ENCODE measurements at regions of chr19 and their contacts with region 1.

Region 1: GRCh38 chr19:42325273-42325895 is at the start of gene MEGF8:
- DNase-seq: peak; percentile 99
- ATAC-seq: peak; percentile 98
- H3K4me3 Mint-ChIP-seq: peak within 1 kb of the TSS; percentile 80
- H3K27ac Mint-ChIP-seq: peak within 1 kb of the TSS; percentile 69
- H3K4me1 Mint-ChIP-seq: peaks cover 12% of the 10 kb centered on the region
- H3K27me3 Mint-ChIP-seq: peaks cover 12% of the 10 kb centered on the region
- total RNA-seq, gene MEGF8: 5.2 to 5.3 TPM

Region 2: GRCh38 chr19:41397086-41398049 is 928.0 kb before region 1 on chr19 and contains the starts of genes BCKDHA and EXOSC5:
- CTCF ChIA-PET with region 1: no interaction called
- POLR2A ChIA-PET with region 1: no interaction called
- intact Hi-C with region 1: loop called in 1 of 2 experiments (anchors 1 kb)
- DNase-seq: peak; percentile 99
- ATAC-seq: peak; percentile 100
- H3K4me3 Mint-ChIP-seq: peak within 1 kb of the TSS; percentile 97
- H3K27ac Mint-ChIP-seq: peak within 1 kb of the TSS; percentile 97
- H3K4me1 Mint-ChIP-seq: peaks cover 31% of the 10 kb centered on the region
- H3K27me3 Mint-ChIP-seq: no peaks in the 10 kb centered on the region
- total RNA-seq, gene BCKDHA: 14.5 to 25.4 TPM
- total RNA-seq, gene EXOSC5: 32.7 to 47.8 TPM

Region 3: DNA sequence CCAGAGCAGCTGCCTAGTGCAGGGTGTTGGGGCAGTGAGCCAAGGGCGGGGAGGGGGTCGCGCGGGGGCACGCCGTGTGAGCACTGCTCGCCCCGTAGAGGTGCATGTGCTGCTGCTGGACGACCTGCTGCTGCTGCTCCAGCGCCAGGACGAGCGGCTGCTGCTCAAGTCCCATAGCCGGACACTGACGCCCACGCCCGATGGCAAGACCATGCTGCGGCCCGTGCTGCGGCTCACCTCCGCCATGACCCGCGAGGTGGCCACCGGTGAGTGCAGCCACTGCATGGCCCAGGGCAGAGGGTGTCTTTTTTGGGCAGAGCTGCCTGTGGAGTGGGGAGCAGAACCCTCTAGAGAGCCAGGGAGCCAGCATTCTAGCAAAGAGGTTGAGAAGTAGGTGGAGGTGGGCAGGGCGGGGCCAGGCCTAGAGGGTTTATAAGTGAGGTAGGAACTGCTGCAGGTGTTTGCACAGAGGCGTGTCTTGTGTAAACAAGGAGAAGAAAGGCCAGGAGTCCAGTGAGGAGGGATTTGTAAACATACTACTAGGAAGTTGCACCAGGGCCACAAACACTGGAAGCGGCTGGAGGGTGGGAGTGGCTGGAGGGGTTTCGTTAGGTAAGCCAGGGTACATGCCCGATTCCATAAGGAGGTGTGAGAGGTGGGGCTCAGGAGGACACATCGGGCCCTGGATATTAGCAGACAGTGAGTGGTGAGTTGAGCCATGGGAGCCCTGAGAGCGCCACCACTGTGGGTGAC is 421.1 kb before region 1 on chr19:
- CTCF ChIA-PET with region 1: no interaction called
- POLR2A ChIA-PET with region 1: no interaction called
- intact Hi-C with region 1: no loop called
- DNase-seq: no peak
- ATAC-seq: no peak
- H3K4me3 Mint-ChIP-seq: no peak overlapping the region
- H3K27ac Mint-ChIP-seq: peak overlapping the region; percentile 55
- H3K4me1 Mint-ChIP-seq: peaks cover 24% of the 10 kb centered on the region
- H3K27me3 Mint-ChIP-seq: no peaks in the 10 kb centered on the region

Region 4: DNA sequence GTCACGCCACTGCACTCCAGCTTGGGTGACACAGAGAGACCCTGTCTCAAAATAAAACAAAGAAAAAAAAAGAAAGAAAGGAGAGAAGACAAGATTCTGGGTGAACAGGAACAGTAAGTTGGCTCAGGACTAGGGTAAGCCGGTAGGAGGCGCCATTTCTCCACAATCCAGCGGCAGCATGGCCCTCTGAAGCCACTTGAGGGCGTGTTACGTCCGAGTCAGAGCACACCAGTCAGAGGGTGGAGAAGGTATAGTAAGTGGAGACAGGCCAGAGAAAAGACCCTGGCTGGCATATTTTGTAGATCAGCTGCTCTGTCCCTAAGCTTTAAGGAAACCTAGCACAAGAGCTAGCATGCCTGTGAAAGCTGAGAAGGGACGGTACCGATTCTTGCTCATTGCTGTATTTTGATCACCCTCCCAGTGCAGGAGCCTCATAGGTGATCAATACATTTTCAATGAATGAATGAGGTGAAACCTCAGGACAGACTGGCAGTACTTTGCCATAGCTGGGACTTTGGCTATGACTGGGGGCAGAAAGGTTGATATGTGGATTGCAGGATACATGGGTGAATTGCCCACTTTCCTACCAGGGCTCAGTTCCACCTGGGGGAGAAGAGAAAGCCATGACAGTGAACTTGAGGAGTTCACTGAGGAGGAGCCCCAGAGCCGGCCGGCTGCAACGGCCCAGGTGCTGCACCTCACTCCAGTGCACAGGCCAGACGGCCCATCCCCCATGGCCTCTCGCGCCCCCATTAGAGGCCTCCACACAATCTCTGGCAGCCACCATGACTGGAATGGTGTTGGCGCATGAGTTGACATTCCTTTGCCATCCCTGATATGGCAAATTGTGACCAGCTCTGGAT is 216.6 kb before region 1 on chr19:
- CTCF ChIA-PET with region 1: no interaction called
- POLR2A ChIA-PET with region 1: no interaction called
- intact Hi-C with region 1: loop called (anchors 1 to 2 kb)
- DNase-seq: peak; percentile 95
- ATAC-seq: peak; percentile 95
- H3K4me3 Mint-ChIP-seq: no peak overlapping the region
- H3K27ac Mint-ChIP-seq: no peak overlapping the region
- H3K4me1 Mint-ChIP-seq: peaks cover 48% of the 10 kb centered on the region
- H3K27me3 Mint-ChIP-seq: no peaks in the 10 kb centered on the region

Region 5: GRCh38 chr19:42244347-42245220 is 80.8 kb before region 1 on chr19:
- CTCF ChIA-PET with region 1: no interaction called
- POLR2A ChIA-PET with region 1: no interaction called
- intact Hi-C with region 1: loop called (anchors 1 kb)
- DNase-seq: peak; percentile 96
- ATAC-seq: peak; percentile 49
- H3K4me3 Mint-ChIP-seq: peak overlapping the region; percentile 93
- H3K27ac Mint-ChIP-seq: peak overlapping the region; percentile 94
- H3K4me1 Mint-ChIP-seq: peaks cover 42% of the 10 kb centered on the region
- H3K27me3 Mint-ChIP-seq: no peaks in the 10 kb centered on the region

Region 6: GRCh38 chr19:42283143-42284065 is 42.0 kb before region 1 on chr19:
- CTCF ChIA-PET with region 1: no interaction called
- POLR2A ChIA-PET with region 1: no interaction called
- intact Hi-C with region 1: loop called in 1 of 2 experiments (anchors 1 kb)
- DNase-seq: peak; percentile 98
- ATAC-seq: peak; percentile 62
- H3K4me3 Mint-ChIP-seq: no peak overlapping the region
- H3K27ac Mint-ChIP-seq: no peak overlapping the region
- H3K4me1 Mint-ChIP-seq: peaks cover 41% of the 10 kb centered on the region
- H3K27me3 Mint-ChIP-seq: no peaks in the 10 kb centered on the region

Region 7: GRCh38 chr19:42396381-42397262 is 71.2 kb after region 1 on chr19:
- CTCF ChIA-PET with region 1: interaction called, 4 read pairs
- POLR2A ChIA-PET with region 1: no interaction called
- intact Hi-C with region 1: loop called in 1 of 2 experiments (anchors 1 kb)
- DNase-seq: peak; percentile 97
- ATAC-seq: peak; percentile 99
- H3K4me3 Mint-ChIP-seq: peak overlapping the region; percentile 88
- H3K27ac Mint-ChIP-seq: peak overlapping the region; percentile 90
- H3K4me1 Mint-ChIP-seq: peaks cover 18% of the 10 kb centered on the region
- H3K27me3 Mint-ChIP-seq: peaks cover 2% of the 10 kb centered on the region

Measured in activated CD4-positive, alpha-beta T cell treated with anti-CD3 and anti-CD28 coated beads for 36 hours (primary cell).